Activated CD4-positive, alpha-beta memory T cell treated with anti-CD3 and anti-CD28 coated beads for 36 hours (primary cell): ENCODE measurements at regions of chr11 and their contacts with region 1.

Region 1: GRCh38 chr11:81787584-81788049 is 946.0 kb downstream of the FAM181B start:
- DNase-seq: peak; percentile 9
- H3K4me3 Mint-ChIP-seq: no peak overlapping the region
- H3K27ac Mint-ChIP-seq: no peak overlapping the region
- H3K4me1 Mint-ChIP-seq: peaks cover 15% of the 10 kb centered on the region
- H3K27me3 Mint-ChIP-seq: no peaks in the 10 kb centered on the region

Region 2: GRCh38 chr11:81804858-81805257 is 17.2 kb after region 1 on chr11:
- CTCF ChIA-PET with region 1: no interaction called
- POLR2A ChIA-PET with region 1: no interaction called
- intact Hi-C with region 1: loop called (anchors 1 kb)
- DNase-seq: no peak
- H3K4me3 Mint-ChIP-seq: no peak overlapping the region
- H3K27ac Mint-ChIP-seq: no peak overlapping the region
- H3K4me1 Mint-ChIP-seq: no peaks in the 10 kb centered on the region
- H3K27me3 Mint-ChIP-seq: no peaks in the 10 kb centered on the region

Region 3: GRCh38 chr11:81886406-81887075 is 98.9 kb after region 1 on chr11:
- CTCF ChIA-PET with region 1: no interaction called
- POLR2A ChIA-PET with region 1: no interaction called
- intact Hi-C with region 1: loop called (anchors 1 kb)
- DNase-seq: peak; percentile 10
- H3K4me3 Mint-ChIP-seq: no peak overlapping the region
- H3K27ac Mint-ChIP-seq: no peak overlapping the region
- H3K4me1 Mint-ChIP-seq: peaks cover 9% of the 10 kb centered on the region
- H3K27me3 Mint-ChIP-seq: no peaks in the 10 kb centered on the region

Region 4: DNA sequence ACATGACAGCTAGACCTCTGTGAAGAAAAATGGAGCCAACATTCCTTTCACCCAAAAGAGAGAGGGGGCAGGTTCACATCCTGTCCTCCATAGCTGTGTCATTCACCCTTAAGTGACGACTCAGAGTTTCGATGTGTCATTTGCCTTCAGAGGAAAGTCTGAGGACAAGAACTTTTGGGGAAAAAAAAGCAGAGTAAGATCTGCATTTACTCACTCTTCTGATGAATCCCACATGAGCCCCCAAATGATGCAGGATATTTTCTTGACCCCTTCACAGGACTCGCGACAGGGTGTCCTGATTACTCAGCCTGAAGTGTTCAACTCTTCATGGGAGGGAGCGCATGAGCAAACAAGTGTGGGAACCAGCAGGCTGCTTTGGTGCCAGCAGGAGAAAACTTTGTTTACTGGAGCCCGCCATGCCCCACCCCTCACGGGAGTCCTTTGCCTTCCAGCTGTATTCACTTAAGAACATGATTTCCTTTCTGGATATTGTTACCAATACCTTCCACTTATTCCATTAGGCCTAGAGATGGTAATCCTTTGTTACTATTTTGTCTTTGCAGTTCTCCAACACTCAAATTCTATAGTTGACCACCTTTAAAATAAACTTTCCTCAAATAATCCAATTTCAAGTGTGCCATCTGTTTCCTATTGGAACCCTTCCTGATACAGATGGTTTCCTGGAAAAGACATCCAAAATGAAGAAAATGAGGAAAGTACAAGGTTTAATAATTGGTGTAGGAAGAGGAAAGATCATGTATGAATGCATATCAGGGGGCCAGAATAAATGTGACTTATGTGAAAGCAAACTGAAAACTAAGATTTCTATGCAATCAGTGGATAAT is 216.3 kb after region 1 on chr11:
- CTCF ChIA-PET with region 1: no interaction called
- POLR2A ChIA-PET with region 1: no interaction called
- intact Hi-C with region 1: loop called (anchors 1 kb)
- DNase-seq: peak; percentile 26
- H3K4me3 Mint-ChIP-seq: no peak overlapping the region
- H3K27ac Mint-ChIP-seq: peak overlapping the region; percentile 73
- H3K4me1 Mint-ChIP-seq: peaks cover 20% of the 10 kb centered on the region
- H3K27me3 Mint-ChIP-seq: no peaks in the 10 kb centered on the region

Region 5: GRCh38 chr11:82229341-82229740 is 441.7 kb after region 1 on chr11:
- CTCF ChIA-PET with region 1: no interaction called
- POLR2A ChIA-PET with region 1: no interaction called
- intact Hi-C with region 1: loop called (anchors 10 kb)
- DNase-seq: no peak
- H3K4me3 Mint-ChIP-seq: no peak overlapping the region
- H3K27ac Mint-ChIP-seq: no peak overlapping the region
- H3K4me1 Mint-ChIP-seq: no peaks in the 10 kb centered on the region
- H3K27me3 Mint-ChIP-seq: no peaks in the 10 kb centered on the region